ENCODE measurements at regions of chr20 and their contacts with region 1.

Region 1: GRCh38 chr20:52410182-52410647 is 218.6 kb upstream of the ZFP64 start:
- DNase-seq: peak; percentile 37 to 94 (median 64)
- ATAC-seq: peak; percentile 88
- H3K4me3 ChIP-seq: peak overlapping the region in 1 of 2 experiments; percentile 15
- H3K4me3 Mint-ChIP-seq: peak overlapping the region; percentile 59
- H3K27ac ChIP-seq: peak overlapping the region; percentile 84 to 93
- H3K27ac Mint-ChIP-seq: peak overlapping the region; percentile 94
- H3K4me1 ChIP-seq: peaks cover 73% of the 10 kb centered on the region
- H3K4me1 Mint-ChIP-seq: peaks cover 75% of the 10 kb centered on the region
- H3K27me3 ChIP-seq: no peaks in the 10 kb centered on the region
- H3K27me3 Mint-ChIP-seq: no peaks in the 10 kb centered on the region
- CTCF ChIP-seq: no peak

Region 2: DNA sequence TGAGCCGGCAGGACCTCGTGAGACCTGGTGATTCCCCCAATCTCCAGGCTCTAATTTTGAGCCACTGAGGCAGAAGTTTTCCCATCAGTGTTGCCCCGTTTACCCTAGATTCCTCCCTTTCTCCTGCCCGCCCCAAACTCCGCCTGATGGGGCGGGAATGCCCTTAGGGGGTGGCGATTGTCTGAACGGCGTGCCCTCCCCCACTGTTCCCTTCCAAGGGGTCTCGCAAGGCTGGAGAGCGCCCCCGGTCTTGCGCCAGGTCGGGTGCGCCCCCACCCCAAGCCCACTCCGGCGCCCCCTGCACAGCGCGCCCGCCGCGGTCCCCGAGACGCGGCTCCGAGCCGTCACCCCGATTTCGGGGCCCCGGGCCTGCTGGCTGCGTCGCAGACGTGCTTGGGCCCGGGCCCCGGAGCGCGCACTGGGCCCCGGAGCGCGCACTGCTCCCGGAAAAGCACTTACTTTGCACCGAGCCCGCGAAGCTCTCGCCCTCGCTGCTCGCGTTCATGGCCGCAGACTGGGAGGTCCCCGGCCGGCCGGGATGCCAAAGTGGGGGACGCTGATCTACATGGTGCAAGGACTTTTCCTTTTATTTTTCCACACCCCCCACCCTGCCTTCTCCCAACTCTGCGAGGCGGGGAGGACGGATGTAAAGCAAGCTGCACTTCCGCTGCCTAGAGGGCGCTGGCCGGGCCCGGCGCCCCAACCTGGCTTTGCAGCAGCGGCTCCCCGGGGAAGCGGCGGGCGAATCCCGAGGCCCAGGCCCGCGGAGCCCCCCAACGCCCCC is 218.9 kb before region 1 on chr20 and contains the start of gene ZFP64:
- CTCF ChIA-PET with region 1: no interaction called
- POLR2A ChIA-PET with region 1: no interaction called
- intact Hi-C with region 1: loop called in 1 of 2 experiments (anchors 2 kb)
- DNase-seq: peak; percentile 42 to 88 (median 73)
- ATAC-seq: peak; percentile 79
- H3K4me3 ChIP-seq: peak within 1 kb of the TSS; percentile 67 to 93
- H3K4me3 Mint-ChIP-seq: peak within 1 kb of the TSS; percentile 92
- H3K27ac ChIP-seq: peak within 1 kb of the TSS; percentile 73 to 84
- H3K27ac Mint-ChIP-seq: peak within 1 kb of the TSS; percentile 94
- H3K4me1 ChIP-seq: peaks cover 16% of the 10 kb centered on the region
- H3K4me1 Mint-ChIP-seq: peaks cover 20% of the 10 kb centered on the region
- H3K27me3 ChIP-seq: no peaks in the 10 kb centered on the region
- H3K27me3 Mint-ChIP-seq: no peaks in the 10 kb centered on the region
- CTCF ChIP-seq: peak; percentile 57
- total RNA-seq, gene ZFP64: 2.4 to 2.7 TPM

Region 3: DNA sequence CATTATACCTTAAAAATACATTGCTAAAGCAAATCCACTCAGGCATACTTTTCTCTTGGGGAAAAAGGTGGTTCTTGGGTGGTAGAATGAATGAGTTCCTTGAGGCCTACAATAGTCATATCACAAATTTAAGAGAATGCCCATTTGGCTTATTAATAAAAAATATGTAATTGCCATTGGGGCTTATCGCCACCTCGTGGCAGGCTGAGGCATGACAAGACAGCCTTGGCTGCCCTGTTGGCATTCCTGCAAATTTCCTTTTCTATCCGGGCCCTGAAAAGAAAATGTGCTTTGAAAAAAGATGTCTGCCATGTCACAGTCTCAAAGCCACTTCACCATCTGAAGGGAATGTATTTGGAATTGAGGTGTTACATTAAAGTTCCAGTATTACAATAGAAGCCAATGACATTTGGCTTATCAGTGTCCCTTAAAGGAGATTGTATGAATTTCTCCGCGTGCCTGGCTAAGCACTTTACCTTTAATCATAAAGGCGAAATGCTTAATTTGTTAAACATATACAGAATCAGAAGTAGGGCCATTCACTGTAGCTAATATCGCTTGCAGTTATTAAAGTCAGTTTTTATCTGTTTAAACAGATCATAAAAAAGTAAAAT is 30.4 kb before region 1 on chr20:
- CTCF ChIA-PET with region 1: interaction called, 15 read pairs
- POLR2A ChIA-PET with region 1: interaction called, 9 read pairs
- intact Hi-C with region 1: loop called in 1 of 2 experiments (anchors 1 kb)
- DNase-seq: peak in 7 of 9 experiments; percentile 5 to 62 (median 43)
- ATAC-seq: no peak
- H3K4me3 ChIP-seq: no peak overlapping the region
- H3K4me3 Mint-ChIP-seq: no peak overlapping the region
- H3K27ac ChIP-seq: no peak overlapping the region
- H3K27ac Mint-ChIP-seq: no peak overlapping the region
- H3K4me1 ChIP-seq: peaks cover 13% of the 10 kb centered on the region
- H3K4me1 Mint-ChIP-seq: peaks cover 19% of the 10 kb centered on the region
- H3K27me3 ChIP-seq: no peaks in the 10 kb centered on the region
- H3K27me3 Mint-ChIP-seq: no peaks in the 10 kb centered on the region
- CTCF ChIP-seq: peak; percentile 95

Region 4: DNA sequence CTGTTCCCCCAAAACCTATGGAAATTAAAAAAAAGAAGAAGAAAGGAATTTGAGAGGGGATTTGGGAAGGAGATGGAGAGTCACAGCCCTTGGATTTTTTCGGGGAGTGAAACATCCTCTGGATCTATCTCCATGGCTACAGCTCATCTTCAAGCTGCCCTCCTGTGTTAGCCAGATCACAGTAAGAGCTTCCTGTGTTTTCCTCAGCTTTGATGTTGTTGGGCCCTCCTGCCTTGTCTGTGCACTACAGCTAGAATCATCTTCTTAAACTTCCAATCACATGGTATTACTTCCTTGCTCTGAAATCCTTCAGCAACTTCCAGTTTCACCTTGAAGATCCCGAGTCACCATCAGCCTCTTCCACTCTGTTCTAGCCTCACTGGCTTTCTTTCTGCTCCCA is 10.9 kb before region 1 on chr20:
- CTCF ChIA-PET with region 1: interaction called, 6 read pairs
- POLR2A ChIA-PET with region 1: interaction called, 10 read pairs
- intact Hi-C with region 1: no loop called
- DNase-seq: peak in 1 of 9 experiments; percentile 32
- ATAC-seq: no peak
- H3K4me3 ChIP-seq: no peak overlapping the region
- H3K4me3 Mint-ChIP-seq: no peak overlapping the region
- H3K27ac ChIP-seq: no peak overlapping the region
- H3K27ac Mint-ChIP-seq: no peak overlapping the region
- H3K4me1 ChIP-seq: peaks cover 31% of the 10 kb centered on the region
- H3K4me1 Mint-ChIP-seq: peaks cover 43% of the 10 kb centered on the region
- H3K27me3 ChIP-seq: no peaks in the 10 kb centered on the region
- H3K27me3 Mint-ChIP-seq: no peaks in the 10 kb centered on the region
- CTCF ChIP-seq: no peak

Region 5: DNA sequence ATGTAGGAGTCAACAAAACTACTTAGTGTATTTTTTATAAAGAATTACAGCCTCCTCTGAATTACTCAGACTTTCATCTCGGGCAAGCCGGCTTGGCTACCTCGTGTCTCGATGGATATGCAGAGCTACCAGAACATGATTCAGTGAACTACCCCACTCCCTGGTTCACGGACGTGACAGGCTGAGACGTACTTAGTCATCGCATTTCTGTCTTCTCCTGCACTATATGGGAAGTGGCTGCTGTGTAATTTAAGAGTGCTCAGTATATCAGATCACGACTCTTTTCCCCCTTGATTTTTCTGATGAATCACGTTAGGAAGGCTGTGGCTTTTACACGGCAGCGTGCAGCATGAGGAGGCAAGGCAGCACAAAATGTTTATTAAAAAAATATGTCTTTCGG is 84.0 kb after region 1 on chr20:
- CTCF ChIA-PET with region 1: no interaction called
- POLR2A ChIA-PET with region 1: no interaction called
- intact Hi-C with region 1: loop called in 1 of 2 experiments (anchors 10 kb)
- DNase-seq: peak in 8 of 9 experiments; percentile 6 to 53 (median 28)
- ATAC-seq: peak; percentile 77
- H3K4me3 ChIP-seq: no peak overlapping the region
- H3K4me3 Mint-ChIP-seq: peak overlapping the region; percentile 62
- H3K27ac ChIP-seq: no peak overlapping the region
- H3K27ac Mint-ChIP-seq: no peak overlapping the region
- H3K4me1 ChIP-seq: peaks cover 11% of the 10 kb centered on the region
- H3K4me1 Mint-ChIP-seq: peaks cover 20% of the 10 kb centered on the region
- H3K27me3 ChIP-seq: no peaks in the 10 kb centered on the region
- H3K27me3 Mint-ChIP-seq: peaks cover 26% of the 10 kb centered on the region
- CTCF ChIP-seq: no peak

Measured in CD8-positive, alpha-beta T cell (primary cell).